Activated CD4-positive, alpha-beta T cell treated with anti-CD3 and anti-CD28 coated beads for 36 hours (primary cell): ENCODE measurements at regions of chr14 and their contacts with region 1.

Region 1: GRCh38 chr14:75487155-75487671 is 35.1 kb upstream of the BATF start:
- DNase-seq: peak; percentile 24
- ATAC-seq: peak; percentile 89
- H3K4me3 Mint-ChIP-seq: no peak overlapping the region
- H3K27ac Mint-ChIP-seq: no peak overlapping the region
- H3K4me1 Mint-ChIP-seq: peaks cover 32% of the 10 kb centered on the region
- H3K27me3 Mint-ChIP-seq: no peaks in the 10 kb centered on the region

Region 2: DNA sequence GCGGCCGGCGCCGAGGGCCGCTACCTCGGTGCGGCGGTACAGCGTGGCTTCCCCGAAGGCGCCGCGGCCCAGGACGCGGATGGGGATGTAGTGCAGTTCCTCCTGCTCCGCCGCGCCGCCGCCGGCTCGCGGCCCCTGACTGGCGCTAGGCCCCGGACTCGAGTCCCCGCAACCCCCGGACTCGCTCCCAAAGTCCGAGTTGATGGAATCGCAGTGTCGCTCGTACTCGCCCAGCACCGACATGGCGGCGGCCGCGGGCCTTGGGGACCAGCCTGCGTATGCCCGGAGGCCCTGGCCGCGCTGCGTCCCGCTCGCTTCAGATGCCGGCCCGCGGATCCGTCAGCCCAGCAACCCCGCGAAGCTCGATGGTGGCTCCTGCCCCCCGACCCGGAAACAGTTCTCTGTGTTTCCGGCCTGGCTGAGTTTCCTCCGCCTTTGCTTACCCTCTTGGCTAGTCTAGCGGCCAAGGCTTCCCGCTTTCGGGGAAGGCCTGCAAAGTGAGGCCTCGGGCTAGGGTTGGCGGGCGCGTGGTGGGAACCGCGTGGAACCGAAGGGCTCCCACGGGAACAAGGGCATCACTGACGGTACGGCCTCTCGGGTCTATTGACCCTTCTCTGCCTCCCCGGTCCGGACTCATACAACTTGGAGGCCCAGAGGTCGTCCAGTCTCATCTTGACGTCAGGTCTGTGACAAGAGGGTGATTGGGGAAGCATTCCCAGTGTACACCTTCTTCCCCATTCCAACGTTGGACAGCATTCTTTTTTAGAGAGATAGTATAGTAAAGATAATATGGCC is 360.3 kb before region 1 on chr14 and contains the start of gene NEK9:
- CTCF ChIA-PET with region 1: interaction called, 6 read pairs
- POLR2A ChIA-PET with region 1: no interaction called
- intact Hi-C with region 1: loop called (anchors 2 to 5 kb)
- DNase-seq: peak; percentile 94
- ATAC-seq: peak; percentile 90
- H3K4me3 Mint-ChIP-seq: peak within 1 kb of the TSS; percentile 97
- H3K27ac Mint-ChIP-seq: peak within 1 kb of the TSS; percentile 98
- H3K4me1 Mint-ChIP-seq: peaks cover 41% of the 10 kb centered on the region
- H3K27me3 Mint-ChIP-seq: no peaks in the 10 kb centered on the region
- total RNA-seq, gene NEK9: 45.2 to 58.7 TPM

Region 3: DNA sequence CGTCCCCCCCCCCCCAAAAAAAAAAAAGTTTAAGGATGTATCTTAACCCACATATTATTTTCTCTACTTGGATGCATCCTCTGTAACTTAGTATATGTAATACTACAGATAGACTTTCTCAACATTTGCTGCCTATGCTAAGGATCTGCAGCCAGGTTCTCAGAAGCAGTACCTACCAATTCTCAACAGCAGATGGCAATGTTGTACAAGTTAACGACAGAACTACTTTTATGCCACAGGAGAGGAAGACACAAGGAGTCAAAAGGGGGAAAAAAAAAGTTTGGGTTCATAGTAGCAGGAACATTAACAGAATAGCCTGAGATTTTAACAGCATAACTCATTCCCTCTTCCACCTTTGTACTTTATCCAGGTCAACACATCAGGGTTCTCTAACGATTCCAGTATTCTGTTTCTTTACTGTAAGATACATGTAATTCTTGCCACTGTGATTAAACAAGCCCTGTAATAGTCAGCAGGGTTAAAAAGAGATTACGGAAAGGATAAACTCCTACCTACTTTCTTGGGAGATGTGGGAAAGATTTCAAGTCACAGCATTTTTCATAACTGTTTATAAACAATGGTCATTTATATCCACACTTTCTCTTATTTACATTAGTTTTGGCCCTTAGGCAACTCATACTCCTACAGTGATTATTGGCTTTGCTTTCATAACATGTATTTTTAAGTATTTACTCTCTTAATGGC is 354.7 kb before region 1 on chr14:
- CTCF ChIA-PET with region 1: interaction called, 6 read pairs
- POLR2A ChIA-PET with region 1: no interaction called
- intact Hi-C with region 1: loop called (anchors 2 to 5 kb)
- DNase-seq: peak; percentile 53
- ATAC-seq: peak; percentile 82
- H3K4me3 Mint-ChIP-seq: no peak overlapping the region
- H3K27ac Mint-ChIP-seq: peak overlapping the region; percentile 33
- H3K4me1 Mint-ChIP-seq: peaks cover 18% of the 10 kb centered on the region
- H3K27me3 Mint-ChIP-seq: no peaks in the 10 kb centered on the region

Region 4: GRCh38 chr14:75328558-75329155 is 158.6 kb before region 1 on chr14:
- CTCF ChIA-PET with region 1: no interaction called
- POLR2A ChIA-PET with region 1: no interaction called
- intact Hi-C with region 1: no loop called
- DNase-seq: no peak
- ATAC-seq: no peak
- H3K4me3 Mint-ChIP-seq: no peak overlapping the region
- H3K27ac Mint-ChIP-seq: no peak overlapping the region
- H3K4me1 Mint-ChIP-seq: peaks cover 12% of the 10 kb centered on the region
- H3K27me3 Mint-ChIP-seq: peaks cover 2% of the 10 kb centered on the region

Region 5: DNA sequence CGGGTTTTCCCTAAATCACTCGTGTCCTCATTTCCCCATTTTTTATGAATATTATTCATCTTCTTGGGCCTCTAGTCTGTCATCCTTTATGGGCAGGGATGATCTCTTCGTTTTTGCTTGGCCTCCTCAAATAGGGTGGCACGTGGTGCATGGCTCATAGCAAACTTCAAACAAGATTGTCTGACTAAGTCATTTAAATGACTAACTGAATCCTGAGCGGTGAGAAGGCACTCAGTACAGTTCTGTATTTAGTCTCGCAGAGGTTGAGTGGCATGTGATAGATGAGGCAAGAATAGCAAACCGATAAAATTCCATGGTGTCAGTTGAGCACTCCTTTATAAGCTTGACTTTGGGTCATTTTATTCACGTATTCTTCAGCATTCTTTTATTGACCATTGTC is 65.0 kb before region 1 on chr14:
- CTCF ChIA-PET with region 1: interaction called, 6 read pairs
- POLR2A ChIA-PET with region 1: no interaction called
- intact Hi-C with region 1: loop called (anchors 2 to 5 kb)
- DNase-seq: peak; percentile 64
- ATAC-seq: peak; percentile 76
- H3K4me3 Mint-ChIP-seq: no peak overlapping the region
- H3K27ac Mint-ChIP-seq: peak overlapping the region; percentile 23
- H3K4me1 Mint-ChIP-seq: peaks cover 38% of the 10 kb centered on the region
- H3K27me3 Mint-ChIP-seq: peaks cover 10% of the 10 kb centered on the region

Region 6: DNA sequence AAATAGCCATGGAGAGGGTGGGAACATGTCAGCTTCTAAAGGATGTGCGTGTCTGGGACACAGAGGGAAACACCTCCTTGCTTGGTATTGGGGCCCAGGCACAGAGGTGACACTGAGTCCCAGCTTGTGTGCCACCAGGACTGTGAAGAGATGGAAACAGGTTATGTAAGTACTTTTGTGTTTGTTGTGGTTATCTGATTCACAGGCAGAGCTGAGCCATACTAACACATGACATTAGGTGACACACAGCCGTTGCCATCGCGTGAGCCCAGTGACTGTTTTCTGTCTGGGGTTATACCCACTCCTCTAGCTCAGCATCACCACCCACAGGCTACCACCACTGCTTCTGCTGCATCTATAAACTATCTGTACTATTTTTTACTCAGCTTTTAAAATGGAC is 79.1 kb after region 1 on chr14:
- CTCF ChIA-PET with region 1: interaction called, 11 read pairs
- POLR2A ChIA-PET with region 1: interaction called, 6 read pairs
- intact Hi-C with region 1: loop called (anchors 1 to 5 kb)
- DNase-seq: peak; percentile 94
- ATAC-seq: peak; percentile 82
- H3K4me3 Mint-ChIP-seq: peak overlapping the region; percentile 72
- H3K27ac Mint-ChIP-seq: peak overlapping the region; percentile 98
- H3K4me1 Mint-ChIP-seq: peaks cover 86% of the 10 kb centered on the region
- H3K27me3 Mint-ChIP-seq: no peaks in the 10 kb centered on the region

Region 7: GRCh38 chr14:75628816-75629215 is 141.6 kb after region 1 on chr14:
- CTCF ChIA-PET with region 1: no interaction called
- POLR2A ChIA-PET with region 1: no interaction called
- intact Hi-C with region 1: no loop called
- DNase-seq: no peak
- ATAC-seq: no peak
- H3K4me3 Mint-ChIP-seq: no peak overlapping the region
- H3K27ac Mint-ChIP-seq: no peak overlapping the region
- H3K4me1 Mint-ChIP-seq: no peaks in the 10 kb centered on the region
- H3K27me3 Mint-ChIP-seq: no peaks in the 10 kb centered on the region

Region 8: DNA sequence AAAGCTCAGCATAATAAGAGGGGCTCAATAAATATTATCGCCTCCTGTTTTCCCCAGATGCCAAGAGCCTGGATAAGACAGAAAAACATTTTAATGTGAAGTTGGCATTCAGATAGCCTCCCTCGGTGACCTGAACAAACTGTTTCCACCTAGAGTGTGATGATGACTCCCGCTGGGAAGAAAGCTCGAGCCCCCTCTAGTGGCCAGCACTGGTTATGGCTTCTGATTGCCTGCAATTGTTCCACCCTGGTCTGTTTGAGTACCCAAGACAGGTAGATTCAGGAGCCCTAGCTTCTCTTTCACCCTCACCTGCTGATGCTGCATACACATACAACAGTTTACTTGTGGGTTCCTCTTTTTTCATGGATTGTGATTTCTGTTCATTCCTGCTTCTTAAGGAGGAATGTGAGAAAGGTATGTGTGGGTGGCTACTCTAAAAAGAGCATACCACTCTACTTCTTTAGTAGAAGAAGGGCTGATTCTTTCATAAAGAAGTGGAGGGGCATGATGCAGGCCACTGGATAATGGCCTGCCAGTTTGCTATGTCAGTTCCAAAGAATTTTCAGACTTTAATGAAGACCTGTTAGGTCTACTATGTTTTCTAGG is 167.0 kb after region 1 on chr14:
- CTCF ChIA-PET with region 1: interaction called, 8 read pairs
- POLR2A ChIA-PET with region 1: no interaction called
- intact Hi-C with region 1: loop called in 1 of 2 experiments (anchors 2 kb)
- DNase-seq: peak; percentile 91
- ATAC-seq: peak; percentile 94
- H3K4me3 Mint-ChIP-seq: no peak overlapping the region
- H3K27ac Mint-ChIP-seq: no peak overlapping the region
- H3K4me1 Mint-ChIP-seq: peaks cover 11% of the 10 kb centered on the region
- H3K27me3 Mint-ChIP-seq: no peaks in the 10 kb centered on the region